Activated CD4-positive, alpha-beta memory T cell treated with anti-CD3 and anti-CD28 coated beads for 36 hours (primary cell): ENCODE measurements at regions of chr14 and their contacts with region 1.

Region 1: GRCh38 chr14:50038398-50039119 is 77.8 kb downstream of the VCPKMT start:
- DNase-seq: peak; percentile 90
- H3K4me3 Mint-ChIP-seq: peak overlapping the region; percentile 74
- H3K27ac Mint-ChIP-seq: peak overlapping the region; percentile 99
- H3K4me1 Mint-ChIP-seq: peaks cover 64% of the 10 kb centered on the region
- H3K27me3 Mint-ChIP-seq: no peaks in the 10 kb centered on the region

Region 2: GRCh38 chr14:49867831-49868723 is 170.5 kb before region 1 on chr14:
- CTCF ChIA-PET with region 1: interaction called, 28 read pairs
- POLR2A ChIA-PET with region 1: interaction called, 43 read pairs
- intact Hi-C with region 1: loop called (anchors 1 kb)
- DNase-seq: peak; percentile 99
- H3K4me3 Mint-ChIP-seq: peak overlapping the region; percentile 94
- H3K27ac Mint-ChIP-seq: peak overlapping the region; percentile 85
- H3K4me1 Mint-ChIP-seq: peaks cover 25% of the 10 kb centered on the region
- H3K27me3 Mint-ChIP-seq: no peaks in the 10 kb centered on the region

Region 3: GRCh38 chr14:49897968-49898367 is 140.6 kb before region 1 on chr14:
- CTCF ChIA-PET with region 1: interaction called, 6 read pairs
- POLR2A ChIA-PET with region 1: interaction called, 36 read pairs
- intact Hi-C with region 1: loop called (anchors 1 kb)
- DNase-seq: no peak
- H3K4me3 Mint-ChIP-seq: peak overlapping the region; percentile 75
- H3K27ac Mint-ChIP-seq: peak overlapping the region; percentile 93
- H3K4me1 Mint-ChIP-seq: peaks cover 29% of the 10 kb centered on the region
- H3K27me3 Mint-ChIP-seq: no peaks in the 10 kb centered on the region

Region 4: DNA sequence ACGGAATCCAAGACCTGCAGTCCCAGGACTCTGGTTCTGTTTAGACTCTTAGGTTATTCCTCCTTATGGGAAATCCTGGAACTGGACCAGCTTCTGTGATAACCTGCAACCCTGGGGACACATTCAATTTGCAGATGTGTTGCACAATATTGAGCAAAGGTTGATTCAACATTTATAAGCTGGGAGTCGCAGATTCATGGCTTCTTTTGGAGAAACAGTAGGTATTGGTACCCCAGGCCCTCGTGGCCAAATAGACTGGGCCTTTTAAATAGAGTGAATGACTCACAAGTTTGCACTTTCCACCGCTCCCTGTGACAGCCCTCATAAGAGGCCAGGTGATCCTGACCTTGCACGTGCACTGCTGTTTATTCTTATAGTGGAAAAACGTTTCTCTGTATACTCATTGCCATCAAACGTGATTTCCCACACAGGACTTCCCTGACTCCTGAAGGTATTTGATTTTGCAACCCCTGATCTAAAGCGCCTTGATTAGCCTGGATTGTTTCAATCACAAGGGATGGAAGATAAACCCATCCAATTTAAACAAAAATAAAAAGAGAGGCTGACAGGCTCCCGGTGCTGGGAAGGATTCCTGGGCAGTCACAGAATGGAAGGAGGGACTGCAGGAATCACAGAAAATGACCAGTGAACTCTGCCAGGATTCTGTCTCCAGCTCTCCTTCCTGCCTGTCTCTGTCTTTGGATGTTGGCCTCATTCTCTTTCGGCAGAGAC is 20.2 kb before region 1 on chr14:
- CTCF ChIA-PET with region 1: interaction called, 8 read pairs
- POLR2A ChIA-PET with region 1: interaction called, 24 read pairs
- intact Hi-C with region 1: loop called (anchors 1 kb)
- DNase-seq: no peak
- H3K4me3 Mint-ChIP-seq: no peak overlapping the region
- H3K27ac Mint-ChIP-seq: no peak overlapping the region
- H3K4me1 Mint-ChIP-seq: peaks cover 44% of the 10 kb centered on the region
- H3K27me3 Mint-ChIP-seq: no peaks in the 10 kb centered on the region

Region 5: DNA sequence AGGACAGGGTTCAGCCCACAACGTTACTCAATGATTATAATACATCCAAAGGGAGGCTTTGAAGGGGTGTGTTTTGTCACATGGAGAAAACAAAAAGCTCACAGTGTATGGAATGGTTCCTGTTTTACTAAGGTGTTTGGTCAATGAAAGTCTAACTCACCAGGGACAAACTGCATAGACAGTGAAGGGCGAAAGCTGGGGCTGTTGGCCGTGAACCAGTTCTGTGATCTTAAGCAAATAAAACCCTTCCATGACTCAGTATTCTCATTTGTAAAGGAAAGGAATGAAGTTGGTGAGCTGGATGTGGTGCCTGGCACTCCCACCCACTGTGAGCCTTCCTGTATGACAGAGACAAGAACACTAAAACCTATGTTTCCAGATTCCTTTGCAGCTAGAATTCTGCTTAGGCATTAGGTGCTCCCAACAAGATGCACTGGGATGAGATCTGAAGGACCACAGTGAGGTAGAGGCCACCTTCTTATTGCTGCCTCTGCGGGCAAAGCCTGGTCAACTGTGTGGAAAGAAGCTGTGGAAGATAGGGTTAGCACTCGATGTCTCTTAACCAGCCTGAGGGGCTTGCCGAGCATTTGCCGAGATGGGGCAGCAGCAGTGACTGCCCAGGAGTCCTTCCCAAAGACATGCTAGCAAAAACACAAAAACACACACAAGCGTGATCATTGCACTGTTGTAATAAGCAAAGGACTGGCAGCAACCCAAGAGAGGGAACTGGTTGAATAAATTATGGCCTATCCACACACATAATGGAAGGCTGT is 29.4 kb after region 1 on chr14:
- CTCF ChIA-PET with region 1: interaction called, 64 read pairs
- POLR2A ChIA-PET with region 1: interaction called, 137 read pairs
- intact Hi-C with region 1: loop called (anchors 1 kb)
- DNase-seq: peak; percentile 56
- H3K4me3 Mint-ChIP-seq: no peak overlapping the region
- H3K27ac Mint-ChIP-seq: peak overlapping the region; percentile 53
- H3K4me1 Mint-ChIP-seq: peaks cover 75% of the 10 kb centered on the region
- H3K27me3 Mint-ChIP-seq: no peaks in the 10 kb centered on the region

Region 6: DNA sequence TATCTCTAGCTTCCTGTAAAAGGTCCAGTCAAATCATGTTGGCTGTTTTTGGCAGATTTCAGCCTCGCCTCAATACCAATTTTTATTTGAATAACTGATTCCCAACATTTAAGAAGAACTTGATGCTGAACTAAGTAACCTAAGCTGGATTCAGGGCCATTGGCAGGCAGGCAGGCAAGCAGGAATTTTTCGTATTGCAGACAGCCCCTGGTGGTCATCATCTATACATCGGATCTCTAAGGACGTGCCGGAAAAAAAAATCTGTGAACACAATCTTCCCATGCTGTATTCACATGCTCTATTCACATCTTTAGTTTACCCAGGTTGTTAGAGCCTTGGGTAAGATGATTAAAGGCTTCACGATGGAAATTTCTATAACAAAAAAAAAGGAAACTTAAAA is 70.8 kb after region 1 on chr14:
- CTCF ChIA-PET with region 1: no interaction called
- POLR2A ChIA-PET with region 1: interaction called, 3 read pairs
- intact Hi-C with region 1: loop called (anchors 1 kb)
- DNase-seq: no peak
- H3K4me3 Mint-ChIP-seq: no peak overlapping the region
- H3K27ac Mint-ChIP-seq: no peak overlapping the region
- H3K4me1 Mint-ChIP-seq: peaks cover 46% of the 10 kb centered on the region
- H3K27me3 Mint-ChIP-seq: no peaks in the 10 kb centered on the region

Region 7: DNA sequence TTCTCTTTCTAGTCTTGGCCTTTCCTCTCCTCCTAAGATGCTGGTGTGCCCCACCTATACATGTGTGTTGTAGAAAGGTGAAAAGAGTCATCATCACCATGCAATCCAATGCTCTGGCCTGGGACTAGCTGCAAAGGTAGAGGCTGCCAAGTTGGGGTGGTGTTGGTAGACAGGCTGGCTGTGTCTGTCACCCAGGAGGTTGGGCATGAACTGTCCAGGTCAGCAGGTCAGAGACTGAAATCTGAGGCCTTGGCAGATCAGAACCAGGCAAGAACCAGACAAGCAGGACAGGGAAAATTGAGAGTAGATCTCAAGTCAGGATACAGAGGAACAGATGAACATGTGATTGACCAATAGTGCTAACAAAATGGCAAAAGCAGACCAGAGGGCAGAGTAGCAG is 247.3 kb after region 1 on chr14:
- CTCF ChIA-PET with region 1: no interaction called
- POLR2A ChIA-PET with region 1: no interaction called
- intact Hi-C with region 1: no loop called
- DNase-seq: no peak
- H3K4me3 Mint-ChIP-seq: no peak overlapping the region
- H3K27ac Mint-ChIP-seq: no peak overlapping the region
- H3K4me1 Mint-ChIP-seq: no peaks in the 10 kb centered on the region
- H3K27me3 Mint-ChIP-seq: no peaks in the 10 kb centered on the region